ENCODE measurements at regions of chr14 and their contacts with region 1.

Region 1: GRCh38 chr14:65482757-65483438 is 70.4 kb downstream of the FUT8 start:
- DNase-seq: no peak
- H3K4me3 ChIP-seq: no peak overlapping the region
- H3K27me3 ChIP-seq: no peaks in the 10 kb centered on the region
- CTCF ChIP-seq: no peak

Region 2: GRCh38 chr14:65117769-65118701 is 364.9 kb before region 1 on chr14:
- CTCF ChIA-PET with region 1: no interaction called
- POLR2A ChIA-PET with region 1: interaction called, 10 read pairs
- DNase-seq: no peak
- H3K4me3 ChIP-seq: no peak overlapping the region
- H3K27me3 ChIP-seq: no peaks in the 10 kb centered on the region; the same call in 1 of the 2 replicates
- CTCF ChIP-seq: no peak

Measured in BJ (cell line).